Natural killer cell (primary cell): ENCODE measurements at regions of chr12 and their contacts with region 1.

Region 1: GRCh38 chr12:89709157-89709994 is 738 bp upstream of the ATP2B1 start:
- DNase-seq: peak; percentile 99 to 100
- ATAC-seq: peak; percentile 79 to 92 (median 79)
- H3K4me3 ChIP-seq: peak overlapping the region; percentile 94
- H3K4me3 Mint-ChIP-seq: peak overlapping the region; percentile 96
- H3K27ac ChIP-seq: peak overlapping the region; percentile 99
- H3K27ac Mint-ChIP-seq: peak overlapping the region; percentile 96 to 97
- H3K4me1 ChIP-seq: peaks cover 15% of the 10 kb centered on the region
- H3K4me1 Mint-ChIP-seq: peaks cover 40 to 43% of the 10 kb centered on the region in 2 donors
- H3K27me3 ChIP-seq: no peaks in the 10 kb centered on the region
- H3K27me3 Mint-ChIP-seq: no peaks in the 10 kb centered on the region
- CTCF ChIP-seq: no peak

Region 2: GRCh38 chr12:89663577-89664357 is 45.6 kb before region 1 on chr12:
- intact Hi-C with region 1: loop called (anchors 5 kb)
- DNase-seq: peak in 1 of 2 donors; percentile 24
- ATAC-seq: peak; percentile 42 to 53 (median 53)
- H3K4me3 ChIP-seq: no peak overlapping the region
- H3K4me3 Mint-ChIP-seq: peak overlapping the region; percentile 1
- H3K27ac ChIP-seq: no peak overlapping the region
- H3K27ac Mint-ChIP-seq: peak overlapping the region; percentile 2 to 53
- H3K4me1 ChIP-seq: no peaks in the 10 kb centered on the region
- H3K4me1 Mint-ChIP-seq: peaks cover 59 to 67% of the 10 kb centered on the region in 2 donors
- H3K27me3 ChIP-seq: no peaks in the 10 kb centered on the region
- H3K27me3 Mint-ChIP-seq: no peaks in the 10 kb centered on the region
- CTCF ChIP-seq: no peak

Region 3: DNA sequence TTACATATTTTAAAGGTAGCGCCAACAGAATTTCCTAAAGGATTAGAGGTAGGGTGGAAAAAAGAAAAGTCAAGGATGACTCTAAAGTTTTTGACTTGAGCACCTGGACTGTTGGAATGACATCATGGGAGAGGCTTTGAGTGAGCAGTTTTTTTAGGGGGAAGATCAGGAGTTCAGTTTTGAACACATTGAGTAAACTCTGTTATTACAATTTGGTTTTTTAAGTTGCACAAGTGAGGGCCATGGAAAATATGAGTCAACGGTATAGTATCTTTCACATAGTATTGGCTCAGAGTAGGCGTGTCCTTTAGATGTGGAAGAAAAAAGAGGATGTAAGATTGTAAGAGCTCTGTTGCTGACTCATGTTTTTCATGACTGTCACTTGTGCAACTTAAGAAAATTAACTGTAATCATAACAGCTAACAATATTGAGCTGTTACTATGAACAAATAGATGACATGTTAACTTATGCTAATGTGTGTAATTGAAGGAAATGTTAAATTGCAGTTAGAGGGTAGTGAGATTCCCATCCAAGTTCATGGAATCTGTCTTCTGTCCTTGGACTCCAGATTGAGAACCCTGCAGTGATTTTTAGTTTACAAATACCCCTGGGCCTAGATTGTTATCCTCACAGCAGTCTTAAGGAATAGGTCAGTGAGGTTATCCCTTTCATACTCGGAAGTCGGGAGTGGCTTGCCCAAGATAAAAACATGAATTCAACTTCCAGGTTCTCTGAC is 47.4 kb after region 1 on chr12:
- intact Hi-C with region 1: loop called (anchors 1 kb)
- DNase-seq: peak in 1 of 2 donors; percentile 67
- ATAC-seq: peak; percentile 77 to 88 (median 79)
- H3K4me3 ChIP-seq: no peak overlapping the region
- H3K4me3 Mint-ChIP-seq: peak overlapping the region; percentile 18
- H3K27ac ChIP-seq: peak overlapping the region; percentile 72
- H3K27ac Mint-ChIP-seq: peak overlapping the region; percentile 80 to 88
- H3K4me1 ChIP-seq: peaks cover 10% of the 10 kb centered on the region
- H3K4me1 Mint-ChIP-seq: peaks cover 54 to 55% of the 10 kb centered on the region in 2 donors
- H3K27me3 ChIP-seq: no peaks in the 10 kb centered on the region
- H3K27me3 Mint-ChIP-seq: no peaks in the 10 kb centered on the region
- CTCF ChIP-seq: no peak

Region 4: DNA sequence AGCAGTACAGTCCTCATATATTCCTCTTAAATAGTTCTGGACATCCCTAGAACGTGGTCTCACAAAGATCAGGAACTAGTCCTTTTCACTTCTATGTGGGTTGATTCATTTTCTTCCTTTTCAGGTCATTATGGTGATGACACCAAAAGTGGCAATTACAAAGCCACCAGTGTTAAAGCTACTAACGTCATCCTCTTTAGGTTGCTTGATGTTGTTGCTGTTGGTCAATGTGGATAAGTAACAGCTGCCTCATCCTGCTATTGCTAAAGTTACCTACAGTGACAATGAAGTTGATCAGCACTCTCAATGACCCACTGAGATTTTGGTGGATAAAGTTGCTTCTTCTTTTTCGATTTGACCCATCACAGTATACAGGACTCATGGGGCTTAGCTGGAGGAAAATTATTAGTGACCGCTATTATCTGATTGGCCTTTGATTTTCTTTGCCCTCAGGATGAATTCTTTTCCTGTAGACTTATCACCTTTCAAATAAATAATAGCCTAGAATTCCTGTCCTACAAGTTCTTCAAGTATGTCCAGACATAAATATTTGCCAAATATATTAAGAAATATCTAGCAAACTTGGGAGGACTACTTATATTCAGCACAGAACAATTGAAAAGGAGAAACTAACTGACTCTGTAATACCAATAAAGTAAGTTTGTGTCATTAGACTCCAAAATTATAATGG is 53.3 kb after region 1 on chr12:
- intact Hi-C with region 1: loop called (anchors 1 kb)
- DNase-seq: peak in 1 of 2 donors; percentile 42
- ATAC-seq: peak; percentile 83 to 93 (median 86)
- H3K4me3 ChIP-seq: no peak overlapping the region
- H3K4me3 Mint-ChIP-seq: peak overlapping the region; percentile 67
- H3K27ac ChIP-seq: no peak overlapping the region
- H3K27ac Mint-ChIP-seq: peak overlapping the region; percentile 88 to 89
- H3K4me1 ChIP-seq: peaks cover 10% of the 10 kb centered on the region
- H3K4me1 Mint-ChIP-seq: peaks cover 39 to 51% of the 10 kb centered on the region in 2 donors
- H3K27me3 ChIP-seq: no peaks in the 10 kb centered on the region
- H3K27me3 Mint-ChIP-seq: no peaks in the 10 kb centered on the region
- CTCF ChIP-seq: no peak

Region 5: GRCh38 chr12:89862511-89863179 is 153.3 kb after region 1 on chr12:
- intact Hi-C with region 1: loop called (anchors 1 kb)
- DNase-seq: peak; percentile 23 to 81
- ATAC-seq: peak; percentile 52 to 79 (median 54)
- H3K4me3 ChIP-seq: peak overlapping the region; percentile 34
- H3K4me3 Mint-ChIP-seq: peak overlapping the region; percentile 86
- H3K27ac ChIP-seq: peak overlapping the region; percentile 97
- H3K27ac Mint-ChIP-seq: peak overlapping the region; percentile 94 to 96
- H3K4me1 ChIP-seq: peaks cover 16% of the 10 kb centered on the region
- H3K4me1 Mint-ChIP-seq: peaks cover 30 to 42% of the 10 kb centered on the region in 2 donors
- H3K27me3 ChIP-seq: no peaks in the 10 kb centered on the region
- H3K27me3 Mint-ChIP-seq: no peaks in the 10 kb centered on the region
- CTCF ChIP-seq: no peak

Region 6: GRCh38 chr12:89882050-89882449 is 172.7 kb after region 1 on chr12:
- intact Hi-C with region 1: loop called (anchors 5 kb)
- DNase-seq: peak in 1 of 2 donors; percentile 44
- ATAC-seq: no peak
- H3K4me3 ChIP-seq: no peak overlapping the region
- H3K4me3 Mint-ChIP-seq: peak overlapping the region; percentile 25
- H3K27ac ChIP-seq: peak overlapping the region; percentile 82
- H3K27ac Mint-ChIP-seq: peak overlapping the region; percentile 96
- H3K4me1 ChIP-seq: peaks cover 16% of the 10 kb centered on the region
- H3K4me1 Mint-ChIP-seq: peaks cover 33 to 45% of the 10 kb centered on the region in 2 donors
- H3K27me3 ChIP-seq: no peaks in the 10 kb centered on the region
- H3K27me3 Mint-ChIP-seq: peaks cover 0 to 2% of the 10 kb centered on the region in 2 donors
- CTCF ChIP-seq: no peak

Region 7: DNA sequence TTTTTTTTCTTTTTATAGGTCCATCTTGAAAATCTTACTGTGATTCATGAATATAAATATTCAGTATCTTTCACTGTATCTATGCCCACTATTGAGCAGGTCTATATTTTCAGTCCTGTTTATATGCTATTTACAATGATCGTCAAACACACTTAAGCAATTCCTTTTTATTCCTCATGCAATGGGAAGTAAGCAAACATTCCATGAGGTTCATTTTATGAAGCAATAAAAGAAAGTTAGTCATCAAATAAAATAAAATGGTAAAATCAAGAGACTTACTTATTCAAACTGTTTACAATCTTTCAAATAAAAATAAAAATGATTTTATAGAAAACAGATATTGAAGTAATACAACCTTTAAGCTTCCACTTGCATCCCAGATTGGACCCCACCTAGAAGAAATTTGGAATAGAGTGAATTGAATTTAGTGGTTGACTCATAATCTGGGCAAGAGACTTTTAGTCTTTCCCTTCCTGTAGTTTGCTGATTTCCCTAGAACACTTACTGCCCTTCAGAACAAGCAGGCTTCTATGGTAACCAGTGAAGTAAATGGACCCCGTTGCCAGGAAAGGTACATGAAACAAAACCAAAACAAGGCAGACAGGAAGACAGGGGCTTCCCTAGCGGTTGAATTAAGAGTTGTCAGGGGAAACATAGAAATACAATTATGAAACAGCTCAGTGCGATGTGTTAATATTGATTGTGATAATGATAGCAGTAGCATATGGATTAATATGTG is 240.2 kb after region 1 on chr12:
- intact Hi-C with region 1: loop called (anchors 2 kb)
- DNase-seq: peak; percentile 23 to 92
- ATAC-seq: peak; percentile 88 to 96 (median 96)
- H3K4me3 ChIP-seq: no peak overlapping the region
- H3K4me3 Mint-ChIP-seq: peak overlapping the region; percentile 22
- H3K27ac ChIP-seq: peak overlapping the region; percentile 28
- H3K27ac Mint-ChIP-seq: peak overlapping the region; percentile 75 to 89
- H3K4me1 ChIP-seq: peaks cover 7% of the 10 kb centered on the region
- H3K4me1 Mint-ChIP-seq: peaks cover 25 to 27% of the 10 kb centered on the region in 2 donors
- H3K27me3 ChIP-seq: no peaks in the 10 kb centered on the region
- H3K27me3 Mint-ChIP-seq: no peaks in the 10 kb centered on the region
- CTCF ChIP-seq: peak; percentile 35